CD4-positive, alpha-beta memory T cell (primary cell): ENCODE measurements at regions of chr2 and their contacts with region 1.

Region 1: GRCh38 chr2:202634556-202635427 is at the start of gene FAM117B:
- DNase-seq: peak; percentile 95 to 99 (median 97)
- H3K4me3 ChIP-seq: peak within 1 kb of the TSS; percentile 55 to 72
- H3K4me3 Mint-ChIP-seq: peak within 1 kb of the TSS; percentile 94 to 99 (median 98)
- H3K27ac ChIP-seq: peak within 1 kb of the TSS; percentile 67
- H3K27ac Mint-ChIP-seq: peak within 1 kb of the TSS; percentile 95 to 100 (median 99)
- H3K4me1 ChIP-seq: peaks cover 52% of the 10 kb centered on the region
- H3K4me1 Mint-ChIP-seq: peaks cover 36 to 48% (median 42%) of the 10 kb centered on the region in 4 donors
- H3K27me3 ChIP-seq: no peaks in the 10 kb centered on the region
- H3K27me3 Mint-ChIP-seq: no peaks in the 10 kb centered on the region
- total RNA-seq, gene FAM117B: 26.2 to 27.1 TPM

Region 2: GRCh38 chr2:202299712-202300111 is 335.1 kb before region 1 on chr2:
- CTCF ChIA-PET with region 1: no interaction called
- POLR2A ChIA-PET with region 1: no interaction called
- intact Hi-C with region 1: no loop called
- DNase-seq: no peak
- H3K4me3 ChIP-seq: no peak overlapping the region
- H3K4me3 Mint-ChIP-seq: no peak overlapping the region
- H3K27ac ChIP-seq: no peak overlapping the region
- H3K27ac Mint-ChIP-seq: peak overlapping the region in 2 of 7 donors; percentile 5 to 77
- H3K4me1 ChIP-seq: no peaks in the 10 kb centered on the region
- H3K4me1 Mint-ChIP-seq: peaks cover 0 to 2% (median 0%) of the 10 kb centered on the region in 4 donors
- H3K27me3 ChIP-seq: no peaks in the 10 kb centered on the region
- H3K27me3 Mint-ChIP-seq: no peaks in the 10 kb centered on the region

Region 3: GRCh38 chr2:202375609-202376408 is 259.0 kb before region 1 on chr2 and contains the start of gene BMPR2:
- CTCF ChIA-PET with region 1: no interaction called
- POLR2A ChIA-PET with region 1: no interaction called
- intact Hi-C with region 1: loop called (anchors 1 kb)
- DNase-seq: peak; percentile 73 to 88 (median 81)
- H3K4me3 ChIP-seq: peak within 1 kb of the TSS; percentile 91 to 98
- H3K4me3 Mint-ChIP-seq: peak within 1 kb of the TSS; percentile 96 to 99 (median 99)
- H3K27ac ChIP-seq: peak within 1 kb of the TSS; percentile 76
- H3K27ac Mint-ChIP-seq: peak within 1 kb of the TSS; percentile 91 to 98 (median 95)
- H3K4me1 ChIP-seq: peaks cover 30% of the 10 kb centered on the region
- H3K4me1 Mint-ChIP-seq: peaks cover 21 to 43% (median 23%) of the 10 kb centered on the region in 4 donors
- H3K27me3 ChIP-seq: no peaks in the 10 kb centered on the region
- H3K27me3 Mint-ChIP-seq: no peaks in the 10 kb centered on the region
- total RNA-seq, gene BMPR2: 18.8 to 20.8 TPM

Region 4: DNA sequence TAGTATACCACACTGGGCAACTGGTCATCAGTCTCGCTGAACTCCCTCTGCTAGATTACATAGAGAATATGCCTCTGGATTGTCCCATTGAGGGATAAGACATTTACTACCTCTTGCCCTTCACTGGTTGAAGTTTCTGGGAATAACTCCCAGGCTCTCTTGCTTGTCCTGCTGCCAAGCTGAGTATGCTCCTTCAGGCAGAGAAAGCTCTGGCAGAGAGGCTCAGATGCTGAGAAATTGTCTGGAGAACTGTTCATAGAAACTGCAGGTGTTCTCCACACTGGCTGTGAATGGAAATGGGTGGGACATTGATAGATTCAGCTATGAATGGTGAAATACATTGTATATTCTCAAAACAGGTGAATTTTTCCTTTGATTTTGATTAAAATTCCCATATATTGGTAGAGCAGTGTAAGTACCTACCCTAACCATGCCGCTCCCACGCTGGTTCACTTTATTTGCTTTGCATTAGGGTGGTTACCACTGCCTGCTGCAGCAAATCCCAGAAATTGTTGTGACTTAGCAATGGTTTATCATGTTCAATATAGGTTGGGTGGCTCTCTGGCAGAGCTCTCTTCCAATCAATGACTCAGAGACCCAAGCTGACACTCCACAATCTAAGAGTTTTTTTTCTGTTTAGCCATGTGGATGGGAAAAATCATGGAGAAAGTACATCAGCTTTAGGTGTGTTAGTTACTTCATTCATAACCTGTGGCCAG is 36.7 kb after region 1 on chr2:
- CTCF ChIA-PET with region 1: no interaction called
- POLR2A ChIA-PET with region 1: interaction called, 16 read pairs
- intact Hi-C with region 1: no loop called
- DNase-seq: no peak
- H3K4me3 ChIP-seq: no peak overlapping the region
- H3K4me3 Mint-ChIP-seq: no peak overlapping the region
- H3K27ac ChIP-seq: no peak overlapping the region
- H3K27ac Mint-ChIP-seq: peak overlapping the region in 1 of 7 donors; percentile 14
- H3K4me1 ChIP-seq: peaks cover 40% of the 10 kb centered on the region
- H3K4me1 Mint-ChIP-seq: peaks cover 35 to 64% (median 46%) of the 10 kb centered on the region in 4 donors
- H3K27me3 ChIP-seq: no peaks in the 10 kb centered on the region
- H3K27me3 Mint-ChIP-seq: no peaks in the 10 kb centered on the region

Region 5: GRCh38 chr2:202736826-202737225 is 102.0 kb after region 1 on chr2:
- CTCF ChIA-PET with region 1: no interaction called
- POLR2A ChIA-PET with region 1: no interaction called
- intact Hi-C with region 1: no loop called
- DNase-seq: no peak
- H3K4me3 ChIP-seq: no peak overlapping the region
- H3K4me3 Mint-ChIP-seq: no peak overlapping the region
- H3K27ac ChIP-seq: no peak overlapping the region
- H3K27ac Mint-ChIP-seq: no peak overlapping the region
- H3K4me1 ChIP-seq: peaks cover 3% of the 10 kb centered on the region
- H3K4me1 Mint-ChIP-seq: peaks cover 0 to 9% (median 4%) of the 10 kb centered on the region in 4 donors
- H3K27me3 ChIP-seq: no peaks in the 10 kb centered on the region
- H3K27me3 Mint-ChIP-seq: no peaks in the 10 kb centered on the region

Region 6: GRCh38 chr2:202870431-202871299 is 235.9 kb after region 1 on chr2:
- CTCF ChIA-PET with region 1: interaction called, 3 read pairs
- POLR2A ChIA-PET with region 1: interaction called, 9 read pairs
- intact Hi-C with region 1: loop called (anchors 2 kb)
- DNase-seq: peak; percentile 44 to 57 (median 51)
- H3K4me3 ChIP-seq: peak overlapping the region; percentile 59 to 62
- H3K4me3 Mint-ChIP-seq: peak overlapping the region; percentile 87 to 97 (median 94)
- H3K27ac ChIP-seq: peak overlapping the region; percentile 51
- H3K27ac Mint-ChIP-seq: peak overlapping the region in 6 of 7 donors; percentile 18 to 71 (median 59)
- H3K4me1 ChIP-seq: peaks cover 3% of the 10 kb centered on the region
- H3K4me1 Mint-ChIP-seq: peaks cover 5 to 13% (median 9%) of the 10 kb centered on the region in 4 donors
- H3K27me3 ChIP-seq: no peaks in the 10 kb centered on the region
- H3K27me3 Mint-ChIP-seq: no peaks in the 10 kb centered on the region

Region 7: DNA sequence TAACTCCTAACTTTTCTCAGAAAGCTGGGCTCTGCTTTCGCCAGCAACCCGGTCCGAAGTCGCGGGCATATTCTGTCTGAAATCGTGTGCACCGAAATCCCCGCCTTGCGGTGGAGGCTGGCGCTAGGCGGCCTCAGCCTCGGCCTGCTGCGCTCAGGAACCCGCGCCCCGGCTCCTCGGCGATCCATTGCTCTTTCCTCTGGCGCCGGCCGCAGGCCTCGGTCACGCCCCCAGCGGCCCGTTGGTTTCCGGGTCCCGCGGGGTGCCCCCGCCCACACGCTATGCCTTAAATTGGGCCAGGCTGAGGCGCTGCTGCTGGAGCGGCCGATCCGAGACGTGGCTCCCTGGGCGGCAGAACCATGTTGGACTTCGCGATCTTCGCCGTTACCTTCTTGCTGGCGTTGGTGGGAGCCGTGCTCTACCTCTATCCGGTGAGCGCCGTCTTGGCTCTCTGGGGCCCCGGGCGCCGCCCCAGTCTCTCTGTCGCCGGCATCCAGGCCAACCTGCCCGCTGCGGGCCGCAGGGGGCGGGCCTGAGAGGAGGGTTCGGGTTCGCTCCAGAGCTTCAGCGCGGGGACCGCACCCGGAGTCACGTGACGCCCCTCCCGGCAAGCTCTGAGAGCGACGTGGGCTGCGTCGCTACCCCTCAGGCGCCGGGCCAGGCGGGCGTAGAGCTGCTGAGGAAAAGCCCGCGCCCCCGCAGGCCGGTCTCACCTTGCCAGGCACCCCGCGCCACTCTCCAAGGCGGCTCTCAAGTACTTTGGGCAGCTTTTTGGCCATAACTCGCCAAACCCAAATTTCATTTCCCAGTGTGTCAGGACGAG is 604.1 kb after region 1 on chr2 and contains the start of gene CYP20A1:
- CTCF ChIA-PET with region 1: no interaction called
- POLR2A ChIA-PET with region 1: interaction called, 5 read pairs
- intact Hi-C with region 1: loop called (anchors 1 kb)
- DNase-seq: peak; percentile 95 to 99 (median 98)
- H3K4me3 ChIP-seq: peak within 1 kb of the TSS; percentile 91 to 100
- H3K4me3 Mint-ChIP-seq: peak within 1 kb of the TSS; percentile 94 to 100 (median 98)
- H3K27ac ChIP-seq: peak within 1 kb of the TSS; percentile 90
- H3K27ac Mint-ChIP-seq: peak within 1 kb of the TSS; percentile 98 to 100 (median 100)
- H3K4me1 ChIP-seq: peaks cover 19% of the 10 kb centered on the region
- H3K4me1 Mint-ChIP-seq: peaks cover 23 to 52% (median 28%) of the 10 kb centered on the region in 4 donors
- H3K27me3 ChIP-seq: no peaks in the 10 kb centered on the region
- H3K27me3 Mint-ChIP-seq: no peaks in the 10 kb centered on the region
- total RNA-seq, gene CYP20A1: 47.1 to 50.8 TPM

Region 8: DNA sequence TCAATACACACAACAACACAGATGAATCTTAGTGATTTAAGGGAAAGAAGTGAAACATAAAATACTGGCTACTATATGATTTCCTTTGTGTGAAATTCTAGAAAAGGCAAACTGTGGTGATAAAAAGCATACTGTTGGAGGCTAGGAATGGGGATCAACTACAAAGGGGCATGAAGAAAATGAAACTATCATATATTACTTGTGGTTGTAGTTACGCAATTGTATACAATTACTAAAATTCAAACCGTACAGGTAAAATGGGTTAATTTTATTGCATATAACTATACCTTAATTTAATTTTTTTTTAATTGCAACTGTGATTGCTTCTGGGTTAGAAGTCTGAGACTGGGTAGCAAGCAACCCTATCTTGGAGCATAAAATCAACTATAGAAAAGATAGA is 651.7 kb after region 1 on chr2:
- CTCF ChIA-PET with region 1: no interaction called
- POLR2A ChIA-PET with region 1: no interaction called
- intact Hi-C with region 1: no loop called
- DNase-seq: no peak
- H3K4me3 ChIP-seq: no peak overlapping the region
- H3K4me3 Mint-ChIP-seq: no peak overlapping the region
- H3K27ac ChIP-seq: no peak overlapping the region
- H3K27ac Mint-ChIP-seq: peak overlapping the region in 1 of 7 donors; percentile 15
- H3K4me1 ChIP-seq: no peaks in the 10 kb centered on the region
- H3K4me1 Mint-ChIP-seq: peaks cover 0 to 4% (median 2%) of the 10 kb centered on the region in 4 donors
- H3K27me3 ChIP-seq: no peaks in the 10 kb centered on the region
- H3K27me3 Mint-ChIP-seq: no peaks in the 10 kb centered on the region

Region 9: GRCh38 chr2:203740780-203741281 is 1106.0 kb after region 1 on chr2:
- CTCF ChIA-PET with region 1: no interaction called
- POLR2A ChIA-PET with region 1: no interaction called
- intact Hi-C with region 1: loop called (anchors 10 kb)
- DNase-seq: peak; percentile 78 to 88 (median 86)
- H3K4me3 ChIP-seq: peak overlapping the region in 1 of 2 donors; percentile 28
- H3K4me3 Mint-ChIP-seq: peak overlapping the region; percentile 17 to 86 (median 70)
- H3K27ac ChIP-seq: peak overlapping the region; percentile 66
- H3K27ac Mint-ChIP-seq: peak overlapping the region; percentile 81 to 99 (median 95)
- H3K4me1 ChIP-seq: peaks cover 94% of the 10 kb centered on the region
- H3K4me1 Mint-ChIP-seq: peaks cover 65 to 90% (median 79%) of the 10 kb centered on the region in 4 donors
- H3K27me3 ChIP-seq: no peaks in the 10 kb centered on the region
- H3K27me3 Mint-ChIP-seq: no peaks in the 10 kb centered on the region